ENCODE measurements at regions of chr1 and their contacts with region 1.

Region 1: GRCh38 chr1:216310776-216311175 is 112.5 kb downstream of the USH2A start:
- DNase-seq: peak; percentile 86
- ATAC-seq: peak; percentile 63
- H3K4me3 ChIP-seq: no peak overlapping the region
- H3K27ac ChIP-seq: no peak overlapping the region
- H3K4me1 ChIP-seq: peaks cover 16% of the 10 kb centered on the region
- H3K27me3 ChIP-seq: no peaks in the 10 kb centered on the region
- CTCF ChIP-seq: peak; percentile 99

Region 2: GRCh38 chr1:216119602-216120001 is 191.2 kb before region 1 on chr1:
- CTCF ChIA-PET with region 1: no interaction called
- POLR2A ChIA-PET with region 1: no interaction called
- intact Hi-C with region 1: loop called (anchors 10 kb)
- DNase-seq: peak; percentile 75
- ATAC-seq: peak; percentile 93
- H3K4me3 ChIP-seq: no peak overlapping the region
- H3K27ac ChIP-seq: no peak overlapping the region
- H3K4me1 ChIP-seq: no peaks in the 10 kb centered on the region
- H3K27me3 ChIP-seq: peaks cover 47% of the 10 kb centered on the region
- CTCF ChIP-seq: peak; percentile 87

Region 3: DNA sequence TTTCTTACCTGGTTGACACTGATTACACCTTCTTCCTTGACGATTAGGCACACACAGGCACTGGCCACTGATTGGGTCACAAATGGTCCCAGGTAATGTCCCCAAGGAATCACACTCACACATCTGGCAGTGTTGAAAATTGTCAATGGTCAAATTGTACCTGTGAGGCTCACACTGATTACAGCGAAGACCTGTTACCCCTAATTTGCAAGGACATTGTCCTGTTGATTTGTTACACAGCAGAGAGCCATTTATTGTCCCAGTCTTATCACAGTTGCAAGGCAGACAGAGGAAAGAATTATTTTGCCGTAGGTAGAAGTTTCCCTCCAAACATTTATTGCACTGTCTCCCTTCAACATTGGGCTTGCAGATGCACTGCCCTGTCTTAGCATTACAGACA is 64.2 kb before region 1 on chr1:
- CTCF ChIA-PET with region 1: no interaction called
- POLR2A ChIA-PET with region 1: no interaction called
- intact Hi-C with region 1: no loop called
- DNase-seq: no peak
- ATAC-seq: no peak
- H3K4me3 ChIP-seq: no peak overlapping the region
- H3K27ac ChIP-seq: no peak overlapping the region
- H3K4me1 ChIP-seq: no peaks in the 10 kb centered on the region; the same call in 1 of the 2 replicates
- H3K27me3 ChIP-seq: peaks cover 19% of the 10 kb centered on the region; the same call in 1 of the 2 replicates
- CTCF ChIP-seq: no peak

Region 4: GRCh38 chr1:216535059-216535458 is 224.3 kb after region 1 on chr1:
- CTCF ChIA-PET with region 1: no interaction called
- POLR2A ChIA-PET with region 1: no interaction called
- intact Hi-C with region 1: no loop called
- DNase-seq: no peak
- ATAC-seq: no peak
- H3K4me3 ChIP-seq: no peak overlapping the region
- H3K27ac ChIP-seq: no peak overlapping the region
- H3K4me1 ChIP-seq: peaks cover 13% of the 10 kb centered on the region; the same call in 1 of the 2 replicates
- H3K27me3 ChIP-seq: no peaks in the 10 kb centered on the region
- CTCF ChIP-seq: no peak

Region 5: DNA sequence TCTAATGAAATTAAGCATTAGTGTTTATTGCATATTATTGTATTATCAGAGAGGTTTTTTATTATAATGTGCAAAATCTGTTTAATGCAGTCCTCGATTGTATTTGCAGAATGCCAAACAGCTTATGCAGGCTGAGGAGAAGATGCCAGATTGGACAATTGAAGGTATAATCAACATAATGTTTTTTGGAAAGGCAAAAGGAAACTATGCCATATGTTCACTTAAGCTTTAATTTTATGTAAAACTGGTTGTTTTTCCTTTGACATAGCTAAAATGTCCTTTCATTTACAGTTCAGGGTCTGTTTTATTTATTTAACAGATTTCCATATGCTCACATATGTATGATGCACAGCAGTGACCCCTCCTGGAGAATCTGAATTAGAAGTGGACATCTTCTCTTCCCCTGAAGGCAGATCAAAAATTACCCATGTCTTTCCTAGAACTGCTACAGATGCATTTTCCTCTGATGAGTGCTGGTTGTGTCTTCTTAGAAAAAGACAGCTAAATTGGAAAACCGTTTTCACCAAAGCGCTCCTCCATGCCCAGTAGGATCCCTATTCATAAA is 255.9 kb after region 1 on chr1:
- CTCF ChIA-PET with region 1: interaction called, 7 read pairs
- POLR2A ChIA-PET with region 1: no interaction called
- intact Hi-C with region 1: loop called (anchors 1 kb)
- DNase-seq: peak; percentile 82
- ATAC-seq: peak; percentile 85
- H3K4me3 ChIP-seq: no peak overlapping the region
- H3K27ac ChIP-seq: no peak overlapping the region
- H3K4me1 ChIP-seq: no peaks in the 10 kb centered on the region
- H3K27me3 ChIP-seq: peaks cover 27% of the 10 kb centered on the region
- CTCF ChIP-seq: peak; percentile 95

Region 6: DNA sequence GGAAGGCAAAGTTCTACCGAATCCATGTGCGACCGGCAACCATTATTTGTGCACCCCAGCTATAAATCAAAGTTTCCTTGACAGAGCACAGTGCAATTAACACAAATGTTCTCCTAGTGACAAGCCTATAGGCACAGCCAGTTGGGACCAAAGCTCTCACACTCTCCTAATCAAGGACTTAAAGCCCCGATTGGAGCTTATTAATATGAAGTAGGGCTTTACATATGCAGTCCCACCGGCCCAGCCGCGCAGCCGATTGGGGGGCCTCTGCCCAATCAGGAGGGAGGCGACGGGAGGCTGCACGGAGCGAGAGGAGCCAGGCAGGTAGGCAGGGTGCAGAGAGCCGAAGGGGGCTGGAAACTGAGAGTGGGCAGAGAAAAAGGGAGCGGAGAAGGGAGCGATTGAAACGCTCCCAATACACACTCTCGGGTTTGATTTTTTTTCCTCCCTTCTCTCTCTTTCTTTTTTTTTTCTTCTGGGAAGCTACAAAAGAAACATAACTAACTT is 412.6 kb after region 1 on chr1 and contains the start of gene ESRRG:
- CTCF ChIA-PET with region 1: no interaction called
- POLR2A ChIA-PET with region 1: no interaction called
- intact Hi-C with region 1: loop called (anchors 5 kb)
- DNase-seq: no peak
- ATAC-seq: peak; percentile 87
- H3K4me3 ChIP-seq: peak within 1 kb of the TSS; percentile 23
- H3K27ac ChIP-seq: no peak within 1 kb of the TSS
- H3K4me1 ChIP-seq: no peaks in the 10 kb centered on the region
- H3K27me3 ChIP-seq: peaks cover 98% of the 10 kb centered on the region
- CTCF ChIP-seq: no peak
- total RNA-seq, gene ESRRG: 1.1 and 1.7 TPM in 2 replicates

Measured in PC-3 (cell line).